Activated naive CD4-positive, alpha-beta T cell treated with anti-CD3 and anti-CD28 coated beads for 36 hours (primary cell): ENCODE measurements at regions of chr6 and their contacts with region 1.

Region 1: DNA sequence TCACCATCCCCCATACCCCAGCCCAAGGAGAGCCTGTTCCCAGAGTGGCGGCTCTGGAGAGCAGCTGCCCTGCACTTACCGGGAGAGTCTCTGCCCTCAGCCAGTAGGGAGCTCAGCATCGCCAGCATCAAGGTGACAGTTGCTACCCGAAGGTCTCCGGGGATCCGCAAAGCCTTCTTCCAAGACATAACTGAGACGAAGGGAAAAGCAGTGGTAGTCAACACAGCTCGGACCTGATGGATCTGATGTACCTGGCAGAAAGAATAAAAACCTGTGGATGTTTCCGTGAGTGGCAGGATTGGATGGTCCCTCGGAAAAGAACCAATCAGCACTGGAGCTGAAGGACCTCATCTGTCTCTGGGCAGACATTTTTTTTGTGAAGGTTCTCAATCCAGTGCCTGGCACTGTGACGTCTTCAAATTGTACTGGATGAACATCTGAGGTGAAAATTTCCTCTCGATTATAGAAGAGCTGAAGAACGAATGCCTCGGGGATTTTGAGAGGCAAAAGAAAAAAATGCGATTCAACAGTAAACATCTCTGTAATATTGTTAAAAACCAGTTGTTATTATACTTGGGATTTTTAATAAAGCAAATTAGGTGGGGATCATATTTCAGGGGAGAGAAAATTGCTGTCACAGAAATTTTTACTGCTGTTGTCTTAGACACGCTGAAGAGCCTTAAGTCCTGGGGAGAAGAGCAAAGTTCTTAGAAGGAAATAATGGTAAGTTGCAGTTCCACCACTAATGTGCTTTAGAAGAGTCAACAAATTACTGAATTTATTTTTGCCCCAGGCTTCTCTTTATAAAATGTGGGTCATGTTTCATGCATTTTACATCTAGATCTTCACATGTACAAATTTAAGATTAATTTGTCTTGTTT is at the start of gene HLA-DQB1:
- DNase-seq: peak; percentile 80
- H3K4me3 Mint-ChIP-seq: peak within 1 kb of the TSS; percentile 70
- H3K27ac Mint-ChIP-seq: no peak within 1 kb of the TSS
- H3K4me1 Mint-ChIP-seq: peaks cover 40% of the 10 kb centered on the region
- H3K27me3 Mint-ChIP-seq: peaks cover 32% of the 10 kb centered on the region
- total RNA-seq, gene HLA-DQB1: 6.2 to 7.4 TPM

Region 2: DNA sequence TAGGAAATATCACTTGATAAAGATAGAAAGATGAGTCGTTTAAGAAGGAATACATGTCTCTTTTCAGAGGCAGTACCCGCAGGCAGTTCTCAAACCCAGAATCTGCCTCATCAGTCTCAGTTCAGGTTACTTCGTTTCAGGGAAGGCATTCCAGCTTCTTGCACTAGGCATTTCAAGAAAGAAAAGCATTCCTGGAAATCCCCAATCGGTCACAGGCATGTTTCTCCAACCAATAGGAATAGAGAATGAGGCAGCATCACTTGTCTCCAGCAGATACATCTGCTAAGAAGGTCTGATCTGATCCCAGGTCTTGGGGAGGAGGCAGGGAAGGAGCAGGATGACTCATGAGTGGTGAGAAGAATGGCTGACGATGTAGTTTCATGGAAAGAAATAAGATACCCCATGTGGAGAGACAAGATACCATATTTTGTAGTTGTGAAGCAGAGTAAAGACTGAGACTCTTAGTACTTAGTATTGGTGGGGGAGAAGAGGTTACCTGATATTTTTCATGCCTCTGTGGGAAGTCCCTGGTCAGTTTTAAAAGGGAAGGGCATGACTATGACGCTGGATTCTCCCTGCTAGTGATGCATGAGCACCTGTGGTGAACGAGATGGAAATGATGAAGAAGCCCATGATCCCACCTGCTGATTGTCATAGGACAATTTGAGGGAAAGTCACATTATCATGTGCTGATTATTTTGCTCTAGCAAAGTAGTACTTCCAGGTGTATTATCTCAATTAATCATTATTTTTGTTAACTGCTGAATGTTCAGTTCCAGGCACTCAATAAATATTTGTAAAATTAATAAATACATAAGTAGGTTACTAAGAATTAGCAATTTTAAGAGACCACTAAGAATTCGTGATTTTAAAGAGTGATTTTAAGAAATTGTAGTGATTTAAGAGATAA is 56.7 kb before region 1 on chr6:
- CTCF ChIA-PET with region 1: no interaction called
- intact Hi-C with region 1: loop called (anchors 1 kb)
- DNase-seq: peak; percentile 69
- H3K4me3 Mint-ChIP-seq: no peak overlapping the region
- H3K27ac Mint-ChIP-seq: no peak overlapping the region
- H3K4me1 Mint-ChIP-seq: peaks cover 14% of the 10 kb centered on the region
- H3K27me3 Mint-ChIP-seq: no peaks in the 10 kb centered on the region

Region 3: DNA sequence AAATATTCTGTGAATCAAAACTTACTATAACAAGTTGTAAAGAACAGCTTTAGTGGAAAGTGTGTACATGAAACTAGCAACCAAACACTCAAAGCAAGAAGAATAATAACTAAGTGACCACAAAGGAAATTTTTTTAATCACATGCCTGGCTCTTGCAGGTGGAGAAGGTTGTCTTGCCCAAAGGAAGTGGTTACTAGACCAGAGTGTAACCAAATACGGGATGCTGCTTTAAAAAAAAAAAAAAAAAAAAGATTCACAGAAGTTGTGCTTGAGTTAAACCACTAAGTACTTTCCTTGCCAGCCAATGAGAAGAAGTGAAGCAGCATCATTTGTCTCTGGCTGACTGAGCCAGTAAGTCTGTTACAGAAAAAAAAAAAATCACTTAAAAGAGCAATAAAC is 18.9 kb after region 1 on chr6:
- CTCF ChIA-PET with region 1: no interaction called
- intact Hi-C with region 1: loop called (anchors 1 kb)
- DNase-seq: peak; percentile 30
- H3K4me3 Mint-ChIP-seq: no peak overlapping the region
- H3K27ac Mint-ChIP-seq: no peak overlapping the region
- H3K4me1 Mint-ChIP-seq: peaks cover 18% of the 10 kb centered on the region
- H3K27me3 Mint-ChIP-seq: no peaks in the 10 kb centered on the region